Sigmoid colon (tissue), 7 donors: ENCODE measurements at regions of chr1 and their contacts with region 1.

Region 1: GRCh38 chr1:172398970-172399755 is 21.3 kb upstream of the C1orf105 start:
- DNase-seq: peak; percentile 90
- H3K4me3 ChIP-seq: peak overlapping the region in 1 of 4 donors; percentile 23
- H3K27ac ChIP-seq: peak overlapping the region; percentile 68 to 82 (median 78)
- H3K4me1 ChIP-seq: peaks cover 0 to 60% (median 55%) of the 10 kb centered on the region in 4 donors
- H3K27me3 ChIP-seq: no peaks in the 10 kb centered on the region
- CTCF ChIP-seq: peak; percentile 64 to 72 (median 68)
- EP300 ChIP-seq: no peak
- POLR2A ChIP-seq: no peak

Region 2: GRCh38 chr1:172089768-172090510 is 309.2 kb before region 1 on chr1:
- intact Hi-C with region 1: loop called (anchors 1 kb)
- DNase-seq: peak; percentile 78
- H3K4me3 ChIP-seq: no peak overlapping the region
- H3K27ac ChIP-seq: no peak overlapping the region
- H3K4me1 ChIP-seq: no peaks in the 10 kb centered on the region
- H3K27me3 ChIP-seq: no peaks in the 10 kb centered on the region
- CTCF ChIP-seq: peak; percentile 42 to 77 (median 64)
- EP300 ChIP-seq: no peak
- POLR2A ChIP-seq: no peak

Region 3: DNA sequence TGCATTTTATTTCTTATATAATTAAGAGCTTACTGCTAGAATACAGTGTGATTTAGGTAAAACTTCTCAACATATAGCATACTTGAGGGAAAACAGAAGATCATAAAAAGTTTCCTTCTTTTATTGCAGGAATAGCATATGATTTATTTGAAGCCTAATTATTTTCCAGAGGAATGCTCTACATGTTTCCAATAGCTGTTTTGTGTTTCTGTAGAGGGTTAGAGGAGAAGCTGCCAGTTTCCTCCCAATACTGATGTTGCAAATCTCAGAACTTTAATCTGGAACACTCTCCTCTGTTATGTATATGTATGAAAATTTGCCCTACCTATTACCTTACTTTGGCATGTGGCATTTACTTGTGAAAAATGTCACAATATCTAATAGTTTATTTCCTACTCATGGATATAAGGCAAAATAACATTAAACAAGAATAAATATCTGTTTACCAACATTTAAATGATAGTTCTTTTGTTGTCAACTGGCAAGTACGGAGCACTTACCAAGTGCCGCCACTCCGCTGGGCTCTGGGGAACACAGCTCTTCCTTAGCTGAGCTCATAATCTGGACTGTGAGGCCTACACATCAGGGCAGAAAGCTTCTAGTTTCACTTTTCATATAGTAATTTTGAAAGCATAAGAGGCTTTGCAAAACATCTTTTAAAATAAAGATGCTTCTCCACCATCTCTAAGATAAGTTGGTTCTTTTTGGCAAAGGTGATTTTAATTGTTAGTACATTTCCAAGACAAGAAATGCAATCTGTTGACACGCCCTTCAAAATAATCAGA is 218.5 kb before region 1 on chr1:
- intact Hi-C with region 1: loop called (anchors 1 kb)
- DNase-seq: peak; percentile 78
- H3K4me3 ChIP-seq: peak overlapping the region in 3 of 4 donors; percentile 10 to 32 (median 28)
- H3K27ac ChIP-seq: peak overlapping the region; percentile 75 to 87 (median 82)
- H3K4me1 ChIP-seq: peaks cover 0 to 54% (median 40%) of the 10 kb centered on the region in 4 donors
- H3K27me3 ChIP-seq: no peaks in the 10 kb centered on the region
- CTCF ChIP-seq: no peak
- EP300 ChIP-seq: no peak
- POLR2A ChIP-seq: no peak

Region 4: DNA sequence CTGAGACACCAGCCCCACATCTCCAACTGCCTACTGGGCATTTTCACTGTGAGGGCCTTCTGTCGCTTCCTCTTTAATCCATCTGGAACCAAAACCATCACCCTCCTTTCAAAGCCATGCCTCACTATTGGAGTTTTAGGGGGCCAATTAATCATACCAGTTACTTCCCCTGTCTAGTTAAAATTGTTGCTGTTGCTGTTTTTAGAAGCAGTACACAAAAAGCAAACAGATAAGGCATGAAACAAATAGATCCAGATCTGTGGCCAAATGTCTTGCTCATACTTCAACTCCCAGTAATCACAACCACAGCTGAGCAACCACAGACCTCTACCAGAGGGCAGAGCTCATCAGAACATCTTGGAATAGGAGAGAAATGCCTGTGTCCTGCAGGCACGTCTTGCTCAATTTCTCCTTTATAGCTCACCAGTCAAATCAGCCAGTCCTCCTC is 112.5 kb before region 1 on chr1:
- intact Hi-C with region 1: loop called (anchors 5 kb)
- DNase-seq: peak; percentile 75
- H3K4me3 ChIP-seq: no peak overlapping the region
- H3K27ac ChIP-seq: peak overlapping the region; percentile 31 to 64 (median 50)
- H3K4me1 ChIP-seq: peaks cover 0 to 28% (median 18%) of the 10 kb centered on the region in 4 donors
- H3K27me3 ChIP-seq: no peaks in the 10 kb centered on the region
- CTCF ChIP-seq: no peak
- EP300 ChIP-seq: no peak
- POLR2A ChIP-seq: no peak

Region 5: DNA sequence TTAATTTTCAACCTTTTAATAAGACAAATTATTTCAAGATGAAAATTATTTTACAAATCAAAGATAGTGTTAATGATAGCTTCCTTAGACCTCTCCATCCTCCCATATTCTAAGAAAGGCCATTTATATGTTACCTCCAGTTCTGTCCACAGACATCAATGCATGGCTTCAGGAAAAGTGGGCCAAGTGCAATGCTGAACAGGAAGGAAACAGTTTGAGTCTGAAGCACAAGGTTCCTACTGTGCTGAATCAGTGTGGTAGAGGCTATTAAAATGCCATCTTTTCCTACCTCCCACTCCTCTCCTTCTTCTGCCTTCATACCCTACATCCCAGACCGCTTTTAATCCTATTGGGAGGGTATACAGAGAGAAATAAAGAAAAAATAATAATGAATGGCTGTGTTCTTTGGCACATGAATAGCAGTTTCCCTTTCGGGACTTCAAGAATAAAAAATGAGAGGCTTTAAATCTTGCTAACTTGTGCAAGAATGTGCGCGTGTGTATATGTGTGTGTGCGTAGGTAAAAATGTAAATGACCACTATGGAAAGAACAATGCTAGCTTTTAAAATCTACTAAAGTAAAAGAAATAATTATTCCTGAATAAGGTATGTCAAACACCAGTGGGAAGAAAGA is 41.3 kb before region 1 on chr1:
- intact Hi-C with region 1: loop called (anchors 2 kb)
- DNase-seq: no peak
- H3K4me3 ChIP-seq: peak overlapping the region in 3 of 4 donors; percentile 14 to 19 (median 18)
- H3K27ac ChIP-seq: peak overlapping the region; percentile 77 to 84 (median 80)
- H3K4me1 ChIP-seq: peaks cover 0 to 70% (median 54%) of the 10 kb centered on the region in 4 donors
- H3K27me3 ChIP-seq: no peaks in the 10 kb centered on the region
- CTCF ChIP-seq: no peak
- EP300 ChIP-seq: peak in 1 of 4 donors; percentile 10
- POLR2A ChIP-seq: no peak

Region 6: GRCh38 chr1:172532700-172533509 is 133.7 kb after region 1 on chr1 and contains the start of gene SUCO:
- intact Hi-C with region 1: loop called (anchors 2 kb)
- DNase-seq: peak; percentile 100
- H3K4me3 ChIP-seq: peak within 1 kb of the TSS; percentile 82 to 94 (median 89)
- H3K27ac ChIP-seq: peak within 1 kb of the TSS; percentile 96 to 99 (median 98)
- H3K4me1 ChIP-seq: peaks cover 0 to 42% (median 23%) of the 10 kb centered on the region in 4 donors
- H3K27me3 ChIP-seq: no peaks in the 10 kb centered on the region
- CTCF ChIP-seq: no peak
- EP300 ChIP-seq: peak in 1 of 4 donors; percentile 34
- POLR2A ChIP-seq: peak; percentile 86 to 93
- total RNA-seq, gene SUCO: 27.4 to 36.6 (median 33.4) TPM